Motor neuron (in vitro differentiated cells): ENCODE measurements at regions of chr9 and their contacts with region 1.

Region 1: DNA sequence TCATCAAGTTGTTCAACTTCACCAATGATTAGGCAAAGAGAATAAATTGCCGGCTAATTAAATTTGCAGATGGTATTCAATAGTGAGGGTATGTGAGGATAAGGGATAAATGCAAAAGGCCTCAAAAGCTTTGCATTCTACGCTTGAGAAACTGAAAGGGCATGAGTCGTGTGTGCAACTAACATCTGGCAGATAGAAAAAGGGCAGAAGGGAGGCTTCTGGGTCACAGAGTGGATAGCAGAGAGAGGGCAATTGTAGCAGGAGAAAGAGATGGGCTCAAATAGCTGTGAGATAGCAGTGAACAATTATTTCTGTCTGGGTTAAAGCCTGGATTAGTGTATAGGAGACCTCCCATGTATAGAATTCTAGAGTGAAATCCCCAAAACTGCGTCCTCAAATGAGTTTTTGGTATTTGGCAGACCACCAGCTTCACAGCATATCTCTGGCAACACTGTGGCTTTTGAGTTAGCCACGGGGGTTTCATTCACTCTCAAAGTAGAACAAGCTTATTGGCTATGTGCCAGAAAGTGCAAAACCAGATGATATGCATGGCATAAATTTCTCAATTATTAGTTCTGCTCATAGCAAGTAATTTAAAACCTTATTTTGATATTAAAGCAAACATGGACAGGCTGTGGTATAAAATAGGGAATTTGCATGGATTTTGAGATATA is 586.3 kb downstream of the BRINP1 start:
- ATAC-seq: no peak
- H3K4me3 ChIP-seq: no peak overlapping the region
- H3K27ac ChIP-seq: no peak overlapping the region
- H3K4me1 ChIP-seq: peaks cover 8 to 12% of the 10 kb centered on the region in 2 donors

Region 2: GRCh38 chr9:118473521-118473920 is 309.4 kb before region 1 on chr9:
- in situ Hi-C with region 1: no loop called
- ATAC-seq: peak in 5 of 8 experiments; percentile 83 to 99 (median 86)
- H3K4me3 ChIP-seq: no peak overlapping the region
- H3K27ac ChIP-seq: no peak overlapping the region
- H3K4me1 ChIP-seq: no peaks in the 10 kb centered on the region

Region 3: GRCh38 chr9:118711843-118712242 is 71.1 kb before region 1 on chr9:
- in situ Hi-C with region 1: loop called in 1 of 9 experiments (anchors 10 kb)
- ATAC-seq: no peak
- H3K4me3 ChIP-seq: no peak overlapping the region
- H3K27ac ChIP-seq: no peak overlapping the region
- H3K4me1 ChIP-seq: no peaks in the 10 kb centered on the region